ENCODE measurements at regions of chr2 and their contacts with region 1.

Region 1: DNA sequence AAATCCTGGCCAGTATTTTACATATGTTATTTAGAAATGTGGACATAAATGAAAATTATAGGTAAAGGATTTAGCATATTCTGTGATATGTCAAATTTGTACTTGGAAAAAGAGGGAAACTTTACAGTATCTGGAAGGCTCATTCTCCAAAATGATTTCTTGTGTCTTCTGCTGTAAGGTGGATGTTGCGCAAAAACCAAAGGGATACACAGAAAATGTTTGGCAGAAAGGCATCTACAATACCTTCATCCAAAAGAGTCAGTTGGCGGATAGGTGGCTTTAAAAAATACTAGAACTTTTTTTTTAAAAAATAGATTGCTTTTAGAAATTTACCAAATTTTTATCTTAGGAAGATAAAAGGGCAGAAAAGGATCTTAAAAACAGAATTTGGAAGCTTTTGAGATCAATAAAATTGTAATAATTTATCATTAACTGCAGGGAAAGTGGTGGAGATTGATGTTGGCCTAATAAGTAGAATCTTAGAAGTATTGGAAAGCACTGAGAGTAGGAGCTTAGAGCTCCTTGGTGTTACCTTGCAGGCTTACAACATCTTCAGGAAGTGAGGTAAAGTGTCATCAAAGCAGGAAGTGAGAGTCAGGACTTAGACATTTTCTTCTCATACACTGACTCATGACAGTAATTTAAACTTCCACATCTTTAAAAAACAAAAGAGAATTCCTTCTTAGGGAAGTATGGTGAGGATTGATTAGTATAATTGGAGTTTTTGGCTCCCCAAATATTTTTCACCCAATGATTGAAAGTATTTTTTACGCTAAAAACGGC is 2.1 kb downstream of the NABP1 start:
- DNase-seq: no peak
- H3K4me3 ChIP-seq: peak overlapping the region; percentile 87 to 88; a peak in 3 of 4 replicates
- H3K27ac ChIP-seq: peak overlapping the region in 1 of 2 experiments; percentile 92; a peak in 2 of 4 replicates
- H3K4me1 ChIP-seq: peaks cover 0 to 17% of the 10 kb centered on the region in 2 experiments
- H3K27me3 ChIP-seq: no peaks in the 10 kb centered on the region
- CTCF ChIP-seq: no peak
- EP300 ChIP-seq: 0 out of 4 replicates have a peak, but pooled peaks of 1 of the 2 experiments have one; percentile 22
- RAD21 ChIP-seq: no peak

Region 2: DNA sequence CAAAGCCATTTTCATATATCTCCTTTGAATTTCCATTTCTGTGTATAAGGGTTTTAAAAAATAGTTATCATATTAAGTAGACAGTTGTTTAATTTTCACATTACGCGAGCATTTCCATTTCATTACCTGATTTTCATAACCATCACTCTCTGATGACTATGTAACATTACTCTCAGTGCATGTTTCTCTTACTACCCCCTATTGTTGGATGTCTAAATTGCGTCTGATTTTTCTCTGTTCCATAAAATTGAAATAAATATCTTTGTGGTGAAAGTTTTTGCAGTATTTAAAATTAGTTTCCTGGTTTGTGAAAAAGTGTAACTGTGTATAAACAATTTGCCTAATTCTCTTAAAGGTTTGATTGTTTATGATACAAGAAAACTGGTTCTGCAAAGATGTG is 311.0 kb before region 1 on chr2:
- CTCF ChIA-PET with region 1: no interaction called
- POLR2A ChIA-PET with region 1: no interaction called
- DNase-seq: peak; percentile 30
- H3K4me3 ChIP-seq: no peak overlapping the region
- H3K27ac ChIP-seq: no peak overlapping the region
- H3K4me1 ChIP-seq: no peaks in the 10 kb centered on the region
- H3K27me3 ChIP-seq: no peaks in the 10 kb centered on the region
- CTCF ChIP-seq: peak; percentile 49
- EP300 ChIP-seq: no peak
- RAD21 ChIP-seq: peak; percentile 65

Region 3: DNA sequence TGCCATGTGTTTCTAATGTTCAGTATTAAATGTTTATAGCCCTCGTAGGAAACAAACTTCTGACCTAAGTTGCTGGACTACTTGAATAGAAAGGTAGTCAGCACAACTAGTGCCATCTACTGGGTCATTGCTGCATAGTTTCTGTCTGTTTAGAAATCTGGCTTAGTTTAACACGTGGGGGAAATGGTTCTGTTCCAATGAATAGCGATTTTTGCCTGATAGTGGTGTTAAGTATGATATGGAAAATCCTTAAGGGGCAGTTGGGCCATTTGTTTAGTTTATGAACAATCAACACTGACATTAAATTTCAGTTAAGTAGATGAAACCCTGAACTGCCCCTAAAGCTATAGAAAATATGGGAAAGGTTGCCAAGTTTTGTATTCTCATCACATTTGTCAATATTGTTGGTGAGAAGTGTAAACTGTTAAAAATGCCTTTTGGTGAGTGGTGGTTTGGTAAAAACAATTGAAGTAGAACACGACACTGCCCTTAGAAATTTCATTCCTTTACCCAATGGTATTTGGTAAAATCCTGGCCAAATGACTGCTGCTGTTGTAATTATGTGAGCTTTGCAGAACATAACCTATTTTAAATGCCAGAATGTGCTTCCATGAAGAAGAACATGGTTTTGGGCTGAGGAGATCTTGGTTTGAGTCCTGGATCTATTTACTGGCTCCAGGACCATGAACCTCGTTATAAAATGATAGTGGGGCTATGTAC is 11.2 kb after region 1 on chr2:
- CTCF ChIA-PET with region 1: interaction called, 11 read pairs
- POLR2A ChIA-PET with region 1: interaction called, 3 read pairs
- DNase-seq: peak; percentile 62
- H3K4me3 ChIP-seq: no peak overlapping the region; a peak in 1 of 4 replicates
- H3K27ac ChIP-seq: peak overlapping the region in 1 of 2 experiments; percentile 38; a peak in 1 of 4 replicates
- H3K4me1 ChIP-seq: peaks cover 4 to 22% of the 10 kb centered on the region in 2 experiments; a peak in 3 of 4 replicates
- H3K27me3 ChIP-seq: no peaks in the 10 kb centered on the region
- CTCF ChIP-seq: peak; percentile 82
- EP300 ChIP-seq: peak in 1 of 2 experiments; percentile 51; a peak in 1 of 4 replicates
- RAD21 ChIP-seq: peak; percentile 78